GM12878 (cell line): ENCODE measurements at regions of chr17 and their contacts with region 1.

Region 1: DNA sequence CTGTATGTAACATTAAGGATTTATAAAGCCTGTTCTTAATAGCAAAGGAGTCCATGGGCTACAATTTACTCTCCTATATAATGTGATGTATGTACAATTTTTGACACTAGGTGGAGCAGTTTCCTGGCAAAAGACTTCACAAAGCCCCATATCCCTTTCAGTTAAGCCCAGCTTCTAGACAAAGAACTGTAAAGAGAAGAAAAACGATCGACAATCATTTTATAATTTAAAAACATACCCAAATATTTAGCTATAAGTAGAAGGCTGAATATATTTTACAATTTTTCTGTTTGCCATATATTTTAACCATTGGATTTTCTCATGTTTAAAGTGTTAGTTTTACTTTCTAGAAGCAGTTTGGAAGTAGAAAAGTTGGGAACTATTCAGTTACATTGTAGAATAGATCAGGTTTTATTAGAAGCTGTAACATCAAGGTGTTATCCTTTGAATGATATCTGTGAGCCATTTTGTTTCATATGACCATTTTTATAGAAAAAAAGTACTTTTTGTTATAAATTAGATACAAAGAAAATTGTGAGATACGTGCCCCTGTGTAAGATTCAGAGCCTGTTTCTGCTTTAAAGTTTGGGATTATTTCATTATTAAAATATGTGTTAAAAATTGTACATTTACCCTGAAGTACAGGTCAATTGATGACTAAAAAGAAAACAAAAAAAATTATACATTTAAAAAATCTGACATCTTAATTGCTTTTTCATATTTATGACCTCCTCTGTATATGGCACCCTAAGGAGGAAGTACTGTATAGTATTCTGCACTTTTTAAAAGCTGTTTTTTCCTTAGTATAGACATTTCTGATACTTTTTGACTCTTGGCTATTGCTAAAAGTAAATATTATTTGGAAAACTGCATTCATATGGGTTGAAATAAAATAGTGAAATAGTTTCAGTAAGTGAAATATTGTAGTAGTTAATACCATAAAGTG is 46.3 kb downstream of the VMP1 start:
- DNase-seq: peak; percentile 73
- ATAC-seq: peak; percentile 91
- H3K4me3 ChIP-seq: no peak overlapping the region
- H3K27ac ChIP-seq: peak overlapping the region; percentile 33; the same call in 1 of the 2 replicates
- H3K4me1 ChIP-seq: peaks cover 13% of the 10 kb centered on the region
- H3K27me3 ChIP-seq: no peaks in the 10 kb centered on the region
- CTCF ChIP-seq: peak; percentile 54 to 82 (median 62)
- EP300 ChIP-seq: no peak
- POLR2A ChIP-seq: no peak
- RAD21 ChIP-seq: peak; percentile 96

Region 2: DNA sequence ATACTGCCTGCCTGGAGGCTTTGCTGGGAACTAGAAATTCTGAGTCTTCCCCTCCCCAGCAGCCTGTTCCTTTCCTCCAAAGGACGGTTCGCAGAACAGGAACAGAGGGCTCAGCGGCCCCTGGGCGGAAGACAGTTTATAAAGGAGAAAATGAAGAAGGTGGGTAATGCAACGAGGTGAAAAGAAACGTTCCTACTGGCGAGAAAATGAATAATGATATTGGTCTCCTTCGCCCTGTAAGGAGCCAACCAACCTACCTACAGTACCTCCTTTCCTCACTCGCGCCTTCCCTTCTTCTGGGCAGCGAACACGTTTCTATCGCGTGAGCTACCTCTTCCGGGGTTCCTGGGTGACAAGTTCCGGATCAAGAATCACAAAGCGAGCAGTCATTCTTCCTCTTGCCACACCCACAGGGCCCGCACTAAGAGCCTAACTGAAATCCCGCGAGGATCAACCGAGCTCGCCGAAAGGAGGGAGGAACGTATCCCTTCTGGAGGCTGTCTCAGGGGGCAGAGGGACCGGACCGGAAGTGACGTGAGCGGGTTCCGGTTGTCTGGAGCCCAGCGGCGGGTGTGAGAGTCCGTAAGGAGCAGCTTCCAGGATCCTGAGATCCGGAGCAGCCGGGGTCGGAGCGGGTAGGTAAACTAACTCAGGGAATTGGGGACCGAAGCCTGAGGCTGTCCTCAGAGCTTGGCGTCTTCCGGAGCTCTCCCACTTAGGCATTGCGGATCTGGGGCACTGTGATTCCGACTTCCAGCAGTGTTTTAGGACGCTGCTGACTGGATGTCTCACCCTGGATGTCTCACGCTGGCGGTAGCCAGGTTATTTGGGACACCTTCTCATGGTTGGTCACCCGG is 46.5 kb before region 1 on chr17 and contains the starts of genes PTRH2 and VMP1:
- CTCF ChIA-PET with region 1: interaction called, 7 read pairs
- POLR2A ChIA-PET with region 1: no interaction called
- RAD21 ChIA-PET with region 1: interaction called, 11 read pairs
- SMC1A ChIA-PET with region 1: interaction called, 9 read pairs
- in situ Hi-C with region 1: no loop called
- intact Hi-C with region 1: no loop called
- DNase-seq: peak; percentile 98
- ATAC-seq: peak; percentile 96
- H3K4me3 ChIP-seq: peak within 1 kb of the TSS; percentile 84
- H3K27ac ChIP-seq: peak within 1 kb of the TSS; percentile 96
- H3K4me1 ChIP-seq: peaks cover 3% of the 10 kb centered on the region; the same call in 1 of the 2 replicates
- H3K27me3 ChIP-seq: no peaks in the 10 kb centered on the region
- CTCF ChIP-seq: no peak
- EP300 ChIP-seq: no peak
- POLR2A ChIP-seq: peak; percentile 91
- RAD21 ChIP-seq: no peak
- polyA plus RNA-seq, gene PTRH2: 128 to 156 TPM
- polyA plus RNA-seq, gene VMP1: 130 to 199 TPM

Region 3: DNA sequence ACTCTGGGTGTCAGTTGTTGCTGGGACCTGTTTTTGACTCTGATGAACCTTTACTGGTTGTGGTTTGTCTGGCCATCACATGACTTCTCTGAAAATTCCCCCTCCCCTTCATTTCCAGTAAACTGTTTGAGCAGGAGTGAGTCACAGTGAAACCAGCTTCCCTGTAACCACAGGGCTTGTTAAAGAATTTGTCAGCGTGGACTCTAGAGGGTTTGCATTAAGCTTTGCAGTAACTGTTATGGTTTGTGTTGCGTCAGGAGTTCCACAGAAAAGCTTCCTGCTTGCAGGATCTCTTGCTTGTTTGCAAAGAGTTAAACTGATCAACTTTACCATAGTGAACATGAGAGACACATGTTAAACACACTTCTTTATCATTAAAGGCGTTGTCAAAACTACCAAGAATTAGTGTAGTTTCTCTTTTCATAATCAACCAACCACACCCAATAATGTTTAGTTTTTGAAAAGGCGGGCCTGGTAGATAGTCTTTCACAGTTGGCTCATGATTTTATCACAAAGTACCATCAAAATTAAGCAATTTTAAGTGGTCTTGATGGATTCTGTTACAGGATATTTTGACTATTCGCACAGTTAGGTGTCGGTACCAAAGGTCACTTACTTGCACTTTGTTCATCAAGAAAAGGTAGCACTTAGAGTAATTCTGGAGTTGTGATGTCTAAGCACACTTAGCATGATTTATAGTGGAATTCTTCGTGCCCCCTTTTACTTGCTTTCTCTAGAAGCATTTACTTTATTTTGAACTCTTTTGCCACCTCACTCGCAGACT is 32.9 kb after region 1 on chr17:
- CTCF ChIA-PET with region 1: interaction called, 47 read pairs
- POLR2A ChIA-PET with region 1: interaction called, 7 read pairs
- RAD21 ChIA-PET with region 1: interaction called, 72 read pairs
- SMC1A ChIA-PET with region 1: interaction called, 75 read pairs
- in situ Hi-C with region 1: no loop called
- intact Hi-C with region 1: no loop called
- DNase-seq: peak; percentile 100
- ATAC-seq: peak; percentile 87
- H3K4me3 ChIP-seq: peak overlapping the region; percentile 20; the same call in 1 of the 2 replicates
- H3K27ac ChIP-seq: peak overlapping the region; percentile 95
- H3K4me1 ChIP-seq: peaks cover 24% of the 10 kb centered on the region
- H3K27me3 ChIP-seq: no peaks in the 10 kb centered on the region
- CTCF ChIP-seq: no peak; a peak in 1 of 6 replicates
- EP300 ChIP-seq: peak; percentile 98 to 99
- POLR2A ChIP-seq: 0 out of 2 replicates have a peak, but pooled peaks have one; percentile 25
- RAD21 ChIP-seq: peak; percentile 33; the same call in 1 of the 2 replicates

Region 4: GRCh38 chr17:59829217-59830006 is 75.6 kb after region 1 on chr17:
- CTCF ChIA-PET with region 1: interaction called, 75 read pairs
- POLR2A ChIA-PET with region 1: interaction called, 29 read pairs
- RAD21 ChIA-PET with region 1: interaction called, 142 read pairs
- SMC1A ChIA-PET with region 1: interaction called, 127 read pairs
- in situ Hi-C with region 1: no loop called
- intact Hi-C with region 1: loop called (anchors 2 kb)
- DNase-seq: peak; percentile 100
- ATAC-seq: peak; percentile 71
- H3K4me3 ChIP-seq: peak overlapping the region; percentile 65
- H3K27ac ChIP-seq: peak overlapping the region; percentile 98
- H3K4me1 ChIP-seq: peaks cover 88% of the 10 kb centered on the region
- H3K27me3 ChIP-seq: no peaks in the 10 kb centered on the region
- CTCF ChIP-seq: no peak
- EP300 ChIP-seq: peak; percentile 97 to 99
- POLR2A ChIP-seq: peak; percentile 42; the same call in 1 of the 2 replicates
- RAD21 ChIP-seq: peak; percentile 18; the same call in 1 of the 2 replicates

Region 5: DNA sequence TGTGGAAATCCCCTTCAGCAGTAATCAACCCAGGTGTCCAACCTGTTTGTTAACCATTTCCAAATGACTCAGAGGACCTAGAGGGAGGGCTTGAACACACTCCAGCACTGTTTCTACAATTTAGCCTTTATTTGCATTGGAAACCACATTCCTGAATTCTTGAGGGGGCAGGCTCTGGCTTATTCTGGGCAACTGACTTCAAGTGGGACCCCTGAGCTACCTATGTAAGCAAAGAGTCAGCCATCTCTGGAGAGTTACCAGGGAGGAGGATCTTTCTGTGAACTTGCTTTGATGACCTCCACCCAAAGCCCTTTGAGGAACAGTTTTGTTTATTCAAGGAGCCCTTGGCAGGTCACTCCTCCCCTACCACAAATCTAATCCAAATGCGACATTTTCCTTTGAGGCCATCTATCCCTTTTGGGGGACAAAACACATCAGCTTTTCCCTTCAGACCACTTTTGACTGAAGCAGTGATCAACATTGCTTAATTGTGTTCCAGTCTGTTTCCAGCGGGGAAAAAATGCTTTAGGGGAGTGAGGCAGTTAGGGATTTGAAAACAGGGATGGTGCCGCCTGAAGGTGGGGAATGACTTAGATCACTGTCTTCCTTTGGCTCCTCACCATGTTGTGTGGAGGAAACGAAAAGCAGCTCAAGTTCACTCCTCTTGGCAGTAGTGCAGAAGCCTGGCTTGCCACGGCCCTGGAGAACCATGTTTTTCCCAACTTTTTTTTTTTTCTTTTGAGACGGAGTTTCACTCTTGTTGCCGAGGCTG is 92.8 kb after region 1 on chr17:
- CTCF ChIA-PET with region 1: interaction called, 12 read pairs
- POLR2A ChIA-PET with region 1: interaction called, 23 read pairs
- RAD21 ChIA-PET with region 1: interaction called, 88 read pairs
- SMC1A ChIA-PET with region 1: interaction called, 81 read pairs
- in situ Hi-C with region 1: no loop called
- intact Hi-C with region 1: loop called (anchors 2 kb)
- DNase-seq: peak; percentile 91
- ATAC-seq: peak; percentile 54
- H3K4me3 ChIP-seq: peak overlapping the region; percentile 28; the same call in 1 of the 2 replicates
- H3K27ac ChIP-seq: peak overlapping the region; percentile 68
- H3K4me1 ChIP-seq: peaks cover 55% of the 10 kb centered on the region
- H3K27me3 ChIP-seq: no peaks in the 10 kb centered on the region
- CTCF ChIP-seq: no peak
- EP300 ChIP-seq: peak; percentile 65 to 76
- POLR2A ChIP-seq: no peak
- RAD21 ChIP-seq: no peak

Region 6: DNA sequence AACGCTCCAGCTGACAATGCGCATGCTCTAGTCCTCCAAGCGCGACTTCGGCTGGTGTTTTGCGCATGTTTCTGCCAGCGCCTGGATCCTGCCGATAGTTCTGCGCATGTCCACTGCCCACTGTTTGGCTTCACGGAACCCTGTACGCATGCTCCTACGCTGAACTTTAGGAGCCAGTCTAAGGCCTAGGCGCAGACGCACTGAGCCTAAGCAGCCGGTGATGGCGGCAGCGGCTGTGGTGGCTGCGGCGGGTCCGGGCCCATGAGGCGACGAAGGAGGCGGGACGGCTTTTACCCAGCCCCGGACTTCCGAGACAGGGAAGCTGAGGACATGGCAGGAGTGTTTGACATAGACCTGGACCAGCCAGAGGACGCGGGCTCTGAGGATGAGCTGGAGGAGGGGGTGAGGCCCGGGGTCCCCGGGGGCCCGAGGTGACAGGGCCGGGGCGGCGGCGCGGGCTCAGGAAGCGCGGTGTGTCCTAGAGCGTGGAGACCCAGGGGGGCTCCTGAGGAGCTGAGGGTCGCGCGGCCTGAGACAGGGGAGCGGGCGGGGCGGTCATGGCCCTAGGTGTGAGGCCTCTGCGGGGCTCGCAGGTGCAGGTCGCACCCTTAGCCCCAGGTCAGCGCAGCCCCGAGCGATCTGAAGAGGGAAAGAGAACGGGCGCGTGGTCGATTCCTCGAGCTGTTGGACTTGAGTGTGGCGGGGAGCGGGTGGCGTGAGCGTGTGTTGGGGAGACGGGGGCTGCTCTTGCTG is 139.3 kb after region 1 on chr17 and contains the starts of genes RPS6KB1 and TUBD1:
- CTCF ChIA-PET with region 1: interaction called, 7 read pairs
- POLR2A ChIA-PET with region 1: interaction called, 4 read pairs
- RAD21 ChIA-PET with region 1: interaction called, 15 read pairs
- SMC1A ChIA-PET with region 1: interaction called, 17 read pairs
- in situ Hi-C with region 1: no loop called
- intact Hi-C with region 1: no loop called
- DNase-seq: peak; percentile 100
- ATAC-seq: peak; percentile 96
- H3K4me3 ChIP-seq: peak within 1 kb of the TSS; percentile 89
- H3K27ac ChIP-seq: peak within 1 kb of the TSS; percentile 76
- H3K4me1 ChIP-seq: no peaks in the 10 kb centered on the region
- H3K27me3 ChIP-seq: no peaks in the 10 kb centered on the region
- CTCF ChIP-seq: no peak
- EP300 ChIP-seq: no peak
- POLR2A ChIP-seq: peak; percentile 100
- RAD21 ChIP-seq: no peak
- polyA plus RNA-seq, gene RPS6KB1: 6.6 to 11.5 TPM
- polyA plus RNA-seq, gene TUBD1: 5.3 to 6.6 TPM

Region 7: GRCh38 chr17:60036796-60037612 is 283.2 kb after region 1 on chr17:
- CTCF ChIA-PET with region 1: interaction called, 30 read pairs
- POLR2A ChIA-PET with region 1: interaction called, 3 read pairs
- RAD21 ChIA-PET with region 1: interaction called, 4 read pairs
- SMC1A ChIA-PET with region 1: interaction called, 10 read pairs
- in situ Hi-C with region 1: loop called (anchors 5 kb)
- intact Hi-C with region 1: loop called (anchors 10 kb)
- DNase-seq: peak; percentile 12
- ATAC-seq: peak; percentile 98
- H3K4me3 ChIP-seq: no peak overlapping the region
- H3K27ac ChIP-seq: no peak overlapping the region
- H3K4me1 ChIP-seq: peaks cover 7% of the 10 kb centered on the region
- H3K27me3 ChIP-seq: peaks cover 0 to 3% of the 10 kb centered on the region in 2 experiments; a peak in 1 of 4 replicates
- CTCF ChIP-seq: peak; percentile 89 to 97 (median 97)
- EP300 ChIP-seq: no peak
- POLR2A ChIP-seq: no peak
- RAD21 ChIP-seq: peak; percentile 48; the same call in 1 of the 2 replicates

Region 8: GRCh38 chr17:60327122-60327900 is 573.5 kb after region 1 on chr17:
- CTCF ChIA-PET with region 1: no interaction called
- POLR2A ChIA-PET with region 1: no interaction called
- RAD21 ChIA-PET with region 1: no interaction called
- SMC1A ChIA-PET with region 1: no interaction called
- in situ Hi-C with region 1: no loop called
- intact Hi-C with region 1: no loop called
- DNase-seq: no peak
- ATAC-seq: no peak
- H3K4me3 ChIP-seq: no peak overlapping the region
- H3K27ac ChIP-seq: no peak overlapping the region
- H3K4me1 ChIP-seq: no peaks in the 10 kb centered on the region
- H3K27me3 ChIP-seq: no peaks in the 10 kb centered on the region
- CTCF ChIP-seq: no peak
- EP300 ChIP-seq: no peak
- POLR2A ChIP-seq: no peak
- RAD21 ChIP-seq: no peak